ENCODE measurements at regions of chr1 and their contacts with region 1.

Region 1: GRCh38 chr1:46489638-46490405 is at the start of gene DMBX1:
- DNase-seq: peak; percentile 20
- H3K4me3 Mint-ChIP-seq: peak within 1 kb of the TSS; percentile 67
- H3K27ac Mint-ChIP-seq: peak within 1 kb of the TSS; percentile 10
- H3K4me1 Mint-ChIP-seq: peaks cover 17% of the 10 kb centered on the region
- H3K27me3 Mint-ChIP-seq: peaks cover 90% of the 10 kb centered on the region
- total RNA-seq, gene DMBX1: not detected in 2 replicates

Region 2: DNA sequence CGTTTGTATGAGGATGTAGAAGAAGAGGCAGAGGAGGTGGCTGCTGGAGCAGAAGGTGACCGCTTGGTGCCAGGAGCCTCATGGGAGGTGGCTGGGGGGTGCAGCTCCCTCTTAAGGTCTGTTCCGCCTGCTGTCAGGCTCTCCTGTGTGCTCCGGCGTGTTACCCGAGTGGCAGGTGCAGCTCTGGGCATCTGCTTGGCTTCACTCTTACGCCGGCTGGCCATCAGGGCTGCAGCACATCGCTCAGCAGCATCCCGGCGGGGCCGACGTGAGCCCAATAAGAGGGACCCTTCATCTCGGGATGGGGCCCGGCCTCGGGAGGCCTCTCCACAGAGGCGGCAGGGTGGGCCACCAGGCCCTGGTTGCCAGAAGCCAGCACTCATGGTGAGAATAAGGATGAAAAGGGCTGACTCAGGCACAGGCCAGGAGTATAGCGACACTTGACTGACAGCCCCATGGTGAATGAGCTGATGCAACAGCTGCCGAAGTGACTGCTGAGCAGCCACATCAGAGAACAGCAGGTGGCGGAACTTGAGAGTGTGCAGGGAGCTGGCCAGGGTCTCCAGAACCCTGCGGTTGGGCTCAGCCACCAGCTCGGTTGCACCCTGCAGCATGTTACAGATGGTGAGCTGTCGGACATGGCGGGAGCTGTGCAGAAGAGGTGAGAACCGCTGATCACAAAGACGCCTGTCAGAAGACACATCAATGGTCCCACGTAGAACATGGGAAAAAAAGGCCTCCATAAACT is 203.9 kb before region 1 on chr1:
- intact Hi-C with region 1: no loop called
- DNase-seq: peak; percentile 25
- H3K4me3 Mint-ChIP-seq: no peak overlapping the region
- H3K27ac Mint-ChIP-seq: no peak overlapping the region
- H3K4me1 Mint-ChIP-seq: peaks cover 19% of the 10 kb centered on the region
- H3K27me3 Mint-ChIP-seq: no peaks in the 10 kb centered on the region

Region 3: GRCh38 chr1:46442317-46443161 is 47.3 kb before region 1 on chr1:
- intact Hi-C with region 1: loop called (anchors 2 kb)
- DNase-seq: peak; percentile 57
- H3K4me3 Mint-ChIP-seq: peak overlapping the region; percentile 75
- H3K27ac Mint-ChIP-seq: peak overlapping the region; percentile 62
- H3K4me1 Mint-ChIP-seq: peaks cover 7% of the 10 kb centered on the region
- H3K27me3 Mint-ChIP-seq: peaks cover 35% of the 10 kb centered on the region

Region 4: GRCh38 chr1:46466477-46467182 is 23.2 kb before region 1 on chr1:
- intact Hi-C with region 1: no loop called
- DNase-seq: no peak
- H3K4me3 Mint-ChIP-seq: peak overlapping the region; percentile 59
- H3K27ac Mint-ChIP-seq: no peak overlapping the region
- H3K4me1 Mint-ChIP-seq: peaks cover 4% of the 10 kb centered on the region
- H3K27me3 Mint-ChIP-seq: peaks cover 57% of the 10 kb centered on the region

Region 5: GRCh38 chr1:47179017-47179987 is 689.5 kb after region 1 on chr1:
- intact Hi-C with region 1: no loop called
- DNase-seq: peak; percentile 78
- H3K4me3 Mint-ChIP-seq: peak overlapping the region; percentile 88
- H3K27ac Mint-ChIP-seq: peak overlapping the region; percentile 86
- H3K4me1 Mint-ChIP-seq: peaks cover 11% of the 10 kb centered on the region
- H3K27me3 Mint-ChIP-seq: peaks cover 12% of the 10 kb centered on the region

Region 6: DNA sequence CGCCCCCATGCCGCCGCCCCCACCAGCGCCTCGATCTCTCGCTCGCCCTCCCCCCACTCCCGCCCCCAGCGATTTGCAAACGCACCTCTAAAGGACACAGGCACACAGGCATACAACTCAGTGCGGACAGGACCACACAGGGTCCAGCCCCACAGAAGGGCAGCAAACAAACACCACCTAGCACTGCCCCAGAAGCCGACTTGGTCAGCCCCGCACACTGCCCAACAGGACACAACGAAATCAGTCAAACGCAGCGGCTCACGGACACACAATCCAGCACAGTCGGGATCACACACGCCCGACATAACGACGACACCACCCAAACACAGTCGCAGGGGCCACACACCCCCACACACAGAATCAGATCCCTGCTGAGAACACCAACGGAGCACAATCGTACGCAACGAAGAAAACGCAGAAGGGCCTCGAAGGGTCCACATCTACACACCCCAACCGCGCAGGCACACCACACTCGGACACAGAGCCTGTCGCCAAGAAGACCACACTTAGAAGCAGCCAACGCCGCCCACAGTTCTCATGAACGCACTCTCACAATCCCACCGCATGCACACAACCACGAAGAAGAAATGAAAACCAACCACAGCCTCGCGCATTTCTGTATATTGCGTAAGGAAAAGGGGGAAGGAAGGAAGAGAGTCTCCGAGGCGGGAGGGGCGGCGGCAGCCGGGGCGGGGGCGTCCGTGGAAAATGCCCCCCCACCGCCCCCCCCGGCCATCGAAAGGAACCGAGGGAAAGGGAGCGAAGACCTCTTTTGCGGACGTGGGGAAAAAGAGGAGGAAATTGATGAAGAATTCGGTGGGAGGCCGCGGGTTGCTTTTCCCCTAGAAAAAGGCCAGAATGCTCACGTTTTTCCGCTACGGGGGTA is 741.7 kb after region 1 on chr1:
- intact Hi-C with region 1: loop called (anchors 5 kb)
- DNase-seq: peak; percentile 27
- H3K4me3 Mint-ChIP-seq: peak overlapping the region; percentile 81
- H3K27ac Mint-ChIP-seq: peak overlapping the region; percentile 29
- H3K4me1 Mint-ChIP-seq: peaks cover 29% of the 10 kb centered on the region
- H3K27me3 Mint-ChIP-seq: peaks cover 82% of the 10 kb centered on the region